A673 (cell line): ENCODE measurements at regions of chr10 and their contacts with region 1.

Region 1: DNA sequence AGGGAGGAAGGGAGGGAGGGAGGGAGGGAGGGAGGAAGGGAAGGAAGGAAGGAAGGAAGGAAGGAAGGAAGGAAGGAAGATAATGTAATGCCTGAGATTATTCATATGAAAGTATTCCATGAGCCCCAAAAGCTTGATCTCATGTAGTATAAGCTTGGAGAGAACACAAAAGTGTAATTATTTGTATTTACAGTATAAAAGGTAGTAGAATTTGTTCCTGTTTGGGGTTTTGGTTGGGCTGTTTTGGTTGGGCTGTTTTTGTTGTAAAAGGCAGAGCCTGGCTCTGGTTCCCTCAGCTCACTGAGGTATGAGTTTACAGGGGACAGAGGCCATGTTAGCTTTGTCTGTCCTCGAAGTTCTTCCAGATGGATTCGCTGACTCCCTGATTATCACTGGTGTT is 45.3 kb upstream of the EBLN1 start:
- DNase-seq: peak; percentile 75
- H3K4me3 ChIP-seq: no peak overlapping the region
- H3K27ac ChIP-seq: peak overlapping the region; percentile 73
- H3K4me1 ChIP-seq: peaks cover 5% of the 10 kb centered on the region
- H3K27me3 ChIP-seq: no peaks in the 10 kb centered on the region
- CTCF ChIP-seq: no peak

Region 2: DNA sequence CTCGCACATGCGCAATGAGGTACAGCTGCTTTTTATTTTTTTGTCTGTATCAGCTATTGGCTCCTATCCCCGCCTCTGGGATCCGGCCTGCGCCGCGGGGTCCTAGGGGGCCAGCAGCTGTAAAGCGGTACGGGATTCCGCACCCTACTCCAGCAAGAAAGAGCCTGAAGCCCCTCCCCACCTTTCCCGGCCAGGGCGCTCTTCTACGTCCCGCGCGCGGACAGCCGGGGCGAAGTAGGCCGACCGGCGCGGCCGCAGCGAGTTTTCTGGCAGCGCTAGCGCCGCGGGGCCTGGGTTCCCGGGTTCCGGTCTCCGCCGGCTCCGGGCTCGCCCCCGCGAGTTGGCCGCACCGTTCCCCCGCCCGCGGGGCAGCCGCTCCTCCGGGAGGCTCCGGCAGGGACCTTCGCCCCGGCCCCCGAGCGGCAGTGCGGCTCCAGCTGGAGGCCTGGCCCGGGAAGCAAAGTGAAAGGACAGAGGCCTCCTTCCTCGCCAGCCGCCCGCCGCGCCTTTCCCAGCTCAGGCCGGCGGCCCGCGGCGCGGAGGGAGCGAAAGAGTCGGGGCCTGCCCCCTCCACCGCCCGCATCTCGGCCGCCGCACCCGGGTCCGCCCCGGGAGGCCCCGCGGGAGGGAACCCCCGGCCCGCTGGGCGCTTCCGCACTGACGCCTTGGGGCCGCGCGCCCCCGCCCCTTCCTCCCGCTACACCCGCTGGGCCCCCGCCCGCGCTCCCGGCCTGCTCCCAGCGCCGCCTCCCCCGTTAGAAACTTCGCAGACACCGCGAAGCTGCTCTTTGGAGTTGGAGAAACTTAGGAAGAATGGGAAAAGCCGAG is 77.5 kb after region 1 on chr10:
- CTCF ChIA-PET with region 1: no interaction called
- POLR2A ChIA-PET with region 1: interaction called, 13 read pairs
- intact Hi-C with region 1: no loop called
- DNase-seq: peak; percentile 90
- H3K4me3 ChIP-seq: peak overlapping the region; percentile 73
- H3K27ac ChIP-seq: peak overlapping the region; percentile 92
- H3K4me1 ChIP-seq: peaks cover 22% of the 10 kb centered on the region
- H3K27me3 ChIP-seq: peaks cover 78% of the 10 kb centered on the region
- CTCF ChIP-seq: no peak